Activated CD8-positive, alpha-beta T cell treated with anti-CD3 and anti-CD28 coated beads, Interleukin-2, amount 10 ng/mL, durations not matched to agents 7 days and 5 days (primary cell): ENCODE measurements at regions of chr7 and their contacts with region 1.

Region 1: DNA sequence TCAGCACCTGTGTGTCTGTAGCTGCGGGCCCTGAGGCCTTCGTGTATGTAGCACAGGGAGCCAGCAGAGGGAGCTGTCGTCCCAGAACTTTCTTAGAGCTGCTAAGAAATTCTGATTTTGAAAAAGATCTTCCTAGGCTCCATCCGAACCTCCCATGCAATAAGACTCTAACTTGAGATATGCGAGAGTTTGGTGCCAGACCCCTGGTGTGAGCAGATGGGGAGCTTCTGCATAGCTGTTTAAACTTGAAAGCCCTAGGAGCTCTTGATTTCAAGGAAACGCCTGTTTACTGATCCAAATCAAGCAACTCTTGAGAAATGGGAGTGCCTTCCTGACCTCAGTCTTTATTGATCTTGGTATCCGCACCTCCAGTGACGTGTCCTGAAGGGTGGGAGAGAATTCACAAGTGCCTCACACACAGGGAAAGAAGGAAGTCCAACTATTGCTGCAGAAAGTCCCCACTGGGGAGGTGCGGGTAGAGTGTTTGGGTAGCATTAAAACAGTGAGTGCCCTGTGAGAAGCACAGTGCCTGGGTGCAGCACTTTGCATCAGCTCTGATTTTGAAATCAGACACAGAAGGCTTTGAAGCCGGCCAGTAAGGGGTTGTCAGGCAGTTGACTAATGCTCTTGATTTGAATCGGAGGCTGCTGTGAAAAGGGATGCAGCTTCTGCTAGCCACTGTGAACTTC is 66.4 kb upstream of the STRIP2 start:
- DNase-seq: peak; percentile 82
- ATAC-seq: peak; percentile 91
- H3K4me3 Mint-ChIP-seq: peak overlapping the region; percentile 16
- H3K27ac Mint-ChIP-seq: no peak overlapping the region
- H3K4me1 Mint-ChIP-seq: peaks cover 16% of the 10 kb centered on the region
- H3K27me3 Mint-ChIP-seq: peaks cover 2% of the 10 kb centered on the region

Region 2: GRCh38 chr7:129343099-129343700 is 24.6 kb before region 1 on chr7:
- CTCF ChIA-PET with region 1: interaction called, 49 read pairs
- POLR2A ChIA-PET with region 1: no interaction called
- DNase-seq: peak; percentile 44
- ATAC-seq: peak; percentile 52
- H3K4me3 Mint-ChIP-seq: no peak overlapping the region
- H3K27ac Mint-ChIP-seq: no peak overlapping the region
- H3K4me1 Mint-ChIP-seq: peaks cover 41% of the 10 kb centered on the region
- H3K27me3 Mint-ChIP-seq: no peaks in the 10 kb centered on the region

Region 3: GRCh38 chr7:129389829-129390228 is 22.0 kb after region 1 on chr7:
- CTCF ChIA-PET with region 1: interaction called, 35 read pairs
- POLR2A ChIA-PET with region 1: no interaction called
- DNase-seq: no peak
- ATAC-seq: no peak
- H3K4me3 Mint-ChIP-seq: no peak overlapping the region
- H3K27ac Mint-ChIP-seq: no peak overlapping the region
- H3K4me1 Mint-ChIP-seq: no peaks in the 10 kb centered on the region
- H3K27me3 Mint-ChIP-seq: no peaks in the 10 kb centered on the region

Region 4: DNA sequence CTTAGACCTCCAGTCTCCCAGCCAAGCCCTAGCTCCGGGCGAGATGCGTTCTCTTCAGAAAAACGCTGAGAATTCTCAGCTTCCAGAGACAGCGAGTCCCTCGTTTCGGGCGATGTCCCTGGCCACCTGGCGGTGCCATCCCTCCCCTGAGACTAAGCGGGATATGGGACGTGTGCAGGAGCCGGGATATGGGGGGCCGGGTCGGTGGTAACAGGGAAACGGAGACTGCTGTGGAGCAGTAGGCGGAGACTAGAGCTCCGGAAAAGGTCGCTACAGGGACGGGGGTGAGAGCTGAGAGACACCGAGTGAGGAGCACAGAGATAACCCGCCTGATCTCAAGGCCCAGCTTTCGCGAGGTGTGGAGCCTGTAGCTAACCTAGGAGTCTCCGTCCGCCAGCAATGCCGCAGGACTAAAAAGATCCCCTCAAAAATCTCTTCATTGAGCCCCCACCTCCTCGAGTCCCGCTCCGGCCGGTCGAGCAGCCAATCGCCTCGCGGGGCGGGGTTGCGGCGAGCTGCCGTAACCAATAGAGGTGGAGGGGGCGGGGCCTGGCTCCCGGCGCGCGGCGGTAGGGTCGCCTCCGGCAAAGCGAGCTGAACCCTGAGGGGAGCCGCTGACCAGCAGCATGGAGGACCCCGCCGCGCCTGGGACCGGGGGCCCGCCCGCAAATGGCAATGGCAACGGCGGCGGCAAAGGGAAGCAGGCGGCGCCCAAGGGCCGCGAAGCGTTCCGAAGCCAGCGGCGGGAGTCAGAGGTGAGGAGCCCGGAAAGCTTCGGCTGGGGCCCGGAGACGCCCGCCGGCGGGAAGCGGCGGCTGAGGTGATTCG is 66.2 kb after region 1 on chr7 and contains the start of gene STRIP2:
- CTCF ChIA-PET with region 1: interaction called, 48 read pairs
- POLR2A ChIA-PET with region 1: interaction called, 6 read pairs
- DNase-seq: peak; percentile 93
- ATAC-seq: peak; percentile 97
- H3K4me3 Mint-ChIP-seq: peak within 1 kb of the TSS; percentile 88
- H3K27ac Mint-ChIP-seq: peak within 1 kb of the TSS; percentile 75
- H3K4me1 Mint-ChIP-seq: peaks cover 23% of the 10 kb centered on the region
- H3K27me3 Mint-ChIP-seq: peaks cover 28% of the 10 kb centered on the region
- total RNA-seq, gene STRIP2: 6.6 to 7.1 TPM

Region 5: DNA sequence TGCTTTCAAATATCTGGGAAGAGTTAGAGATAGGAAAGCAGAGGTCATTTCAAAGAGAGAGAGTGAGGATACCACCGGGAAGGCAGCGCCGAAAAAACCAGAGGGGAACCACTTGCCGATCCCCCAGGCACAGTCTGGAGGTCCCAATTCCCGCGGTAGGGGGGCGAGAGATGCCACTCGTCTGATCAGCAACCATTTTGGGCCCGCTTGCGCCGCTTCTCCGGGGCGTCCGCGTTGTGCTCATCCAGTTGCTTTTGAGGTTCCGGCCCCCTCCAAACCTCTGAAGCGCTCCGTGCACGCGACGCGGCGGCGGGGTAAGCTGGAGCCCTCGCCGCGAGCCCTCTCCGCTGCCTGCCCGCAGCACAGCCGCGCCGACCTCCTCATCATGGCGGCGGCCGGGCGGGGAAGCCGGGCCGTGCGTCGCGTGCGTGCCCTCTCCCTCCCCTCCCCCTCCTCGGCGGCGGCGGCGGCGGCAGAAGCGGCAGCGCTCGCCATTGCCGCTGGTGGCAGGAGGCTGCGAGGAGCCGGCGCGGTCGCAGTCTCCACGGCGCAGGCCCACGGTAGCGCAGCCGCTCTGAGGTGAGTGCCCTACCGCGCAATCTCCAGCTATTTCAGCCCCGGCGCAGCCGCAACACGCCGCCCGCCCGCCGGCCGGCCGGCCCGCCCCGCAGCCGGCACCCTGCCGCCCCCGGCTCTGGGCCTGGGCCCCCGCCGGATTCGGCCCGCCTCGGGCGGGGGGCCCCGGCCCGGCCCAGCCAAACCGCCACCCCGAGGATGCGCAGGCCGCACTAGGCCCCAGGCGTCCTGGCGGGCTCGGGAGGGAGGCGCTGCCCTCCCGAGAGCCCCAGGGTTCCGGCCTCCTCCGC is 243.6 kb after region 1 on chr7 and contains the start of gene NRF1:
- CTCF ChIA-PET with region 1: interaction called, 10 read pairs
- POLR2A ChIA-PET with region 1: no interaction called
- DNase-seq: peak; percentile 90
- ATAC-seq: peak; percentile 91
- H3K4me3 Mint-ChIP-seq: peak within 1 kb of the TSS; percentile 96
- H3K27ac Mint-ChIP-seq: peak within 1 kb of the TSS; percentile 97
- H3K4me1 Mint-ChIP-seq: peaks cover 55% of the 10 kb centered on the region
- H3K27me3 Mint-ChIP-seq: no peaks in the 10 kb centered on the region
- total RNA-seq, gene NRF1: 28.1 to 30.0 TPM

Region 6: GRCh38 chr7:129644634-129645230 is 276.9 kb after region 1 on chr7:
- CTCF ChIA-PET with region 1: interaction called, 13 read pairs
- POLR2A ChIA-PET with region 1: no interaction called
- DNase-seq: no peak
- ATAC-seq: no peak
- H3K4me3 Mint-ChIP-seq: no peak overlapping the region
- H3K27ac Mint-ChIP-seq: no peak overlapping the region
- H3K4me1 Mint-ChIP-seq: peaks cover 14% of the 10 kb centered on the region
- H3K27me3 Mint-ChIP-seq: no peaks in the 10 kb centered on the region